Right ventricle myocardium superior (tissue), 1 donor: ENCODE measurements at regions of chr4 and their contacts with region 1.

Region 1: GRCh38 chr4:55321707-55322264 is 24.3 kb upstream of the SRD5A3 start:
- DNase-seq: no peak
- ATAC-seq: peak; percentile 68

Region 2: GRCh38 chr4:54971474-54971950 is 350.3 kb before region 1 on chr4:
- intact Hi-C with region 1: loop called (anchors 2 kb)
- DNase-seq: no peak
- ATAC-seq: peak; percentile 91

Region 3: DNA sequence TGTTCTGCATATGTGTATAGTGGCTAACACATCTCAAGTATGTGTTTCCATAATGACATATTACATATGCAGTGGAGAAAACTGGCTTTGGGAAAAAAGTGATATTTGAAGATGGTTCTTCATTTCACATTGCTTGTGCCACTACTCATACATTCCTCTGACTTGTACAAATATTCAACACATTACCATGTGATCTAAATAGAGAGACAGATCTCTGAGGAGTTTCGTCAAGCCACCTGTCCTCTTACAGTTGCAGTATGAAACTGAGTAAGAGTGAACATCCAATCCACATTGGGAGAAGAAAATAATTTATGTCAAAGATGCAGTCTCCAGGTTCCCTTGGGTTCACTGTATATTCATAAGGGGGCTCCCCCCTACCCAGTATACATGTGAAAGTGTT is 320.2 kb before region 1 on chr4:
- intact Hi-C with region 1: loop called (anchors 2 kb)
- DNase-seq: no peak
- ATAC-seq: no peak